ENCODE measurements at regions of chr6 and their contacts with region 1.

Region 1: GRCh38 chr6:33694401-33694931 is 17.0 kb downstream of the UQCC2 start:
- DNase-seq: peak; percentile 88
- H3K4me3 Mint-ChIP-seq: peak overlapping the region; percentile 32
- H3K27ac Mint-ChIP-seq: peak overlapping the region; percentile 97
- H3K4me1 Mint-ChIP-seq: peaks cover 74% of the 10 kb centered on the region
- H3K27me3 Mint-ChIP-seq: no peaks in the 10 kb centered on the region

Region 2: GRCh38 chr6:33633462-33634158 is 60.9 kb before region 1 on chr6:
- CTCF ChIA-PET with region 1: interaction called, 4 read pairs
- POLR2A ChIA-PET with region 1: interaction called, 3 read pairs
- intact Hi-C with region 1: loop called (anchors 5 kb)
- DNase-seq: peak; percentile 70
- H3K4me3 Mint-ChIP-seq: peak overlapping the region; percentile 59
- H3K27ac Mint-ChIP-seq: no peak overlapping the region
- H3K4me1 Mint-ChIP-seq: peaks cover 61% of the 10 kb centered on the region
- H3K27me3 Mint-ChIP-seq: no peaks in the 10 kb centered on the region

Region 3: DNA sequence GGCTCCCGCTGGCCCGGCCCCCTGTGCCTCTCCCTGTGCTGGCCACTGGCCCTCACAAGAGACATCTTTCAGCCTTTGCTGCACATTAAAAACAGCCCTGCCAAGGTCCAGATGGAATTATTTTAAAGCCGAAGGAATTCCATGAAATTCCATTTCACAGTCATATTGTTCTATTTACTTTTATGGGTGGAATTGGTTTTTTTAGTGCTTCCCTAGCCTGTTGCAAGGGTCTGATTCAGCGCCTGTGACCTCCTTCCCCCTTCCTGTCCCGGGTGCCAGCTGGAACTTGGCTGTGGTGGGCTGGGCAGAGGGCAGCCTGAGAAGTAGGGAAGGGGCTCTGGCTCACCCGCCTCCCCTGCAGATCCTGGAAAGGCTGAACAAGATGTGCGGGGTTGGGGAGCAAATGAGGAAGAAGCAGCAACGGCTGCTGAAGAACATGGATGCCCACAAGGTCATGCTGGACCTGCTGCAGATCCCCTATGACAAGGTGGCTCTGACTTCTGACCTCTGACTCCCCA is 17.3 kb before region 1 on chr6:
- CTCF ChIA-PET with region 1: no interaction called
- POLR2A ChIA-PET with region 1: no interaction called
- intact Hi-C with region 1: no loop called
- DNase-seq: no peak
- H3K4me3 Mint-ChIP-seq: no peak overlapping the region
- H3K27ac Mint-ChIP-seq: no peak overlapping the region
- H3K4me1 Mint-ChIP-seq: peaks cover under 1% of the 10 kb centered on the region
- H3K27me3 Mint-ChIP-seq: no peaks in the 10 kb centered on the region

Measured in activated CD4-positive, alpha-beta memory T cell treated with anti-CD3 and anti-CD28 coated beads for 36 hours (primary cell).